Panc1 (cell line): ENCODE measurements at regions of chr10 and their contacts with region 1.

Region 1: GRCh38 chr10:109517748-109518147 is 405.6 kb downstream of the XPNPEP1 start:
- DNase-seq: no peak
- ATAC-seq: no peak
- H3K4me3 ChIP-seq: no peak overlapping the region
- H3K27ac ChIP-seq: no peak overlapping the region
- H3K4me1 ChIP-seq: no peaks in the 10 kb centered on the region
- H3K27me3 ChIP-seq: no peaks in the 10 kb centered on the region
- CTCF ChIP-seq: no peak

Region 2: GRCh38 chr10:107966673-107967225 is 1551.0 kb before region 1 on chr10:
- CTCF ChIA-PET with region 1: no interaction called
- POLR2A ChIA-PET with region 1: interaction called, 14 read pairs
- in situ Hi-C with region 1: no loop called
- intact Hi-C with region 1: no loop called
- DNase-seq: no peak
- ATAC-seq: no peak
- H3K4me3 ChIP-seq: no peak overlapping the region
- H3K27ac ChIP-seq: no peak overlapping the region
- H3K4me1 ChIP-seq: no peaks in the 10 kb centered on the region
- H3K27me3 ChIP-seq: no peaks in the 10 kb centered on the region
- CTCF ChIP-seq: no peak

Region 3: DNA sequence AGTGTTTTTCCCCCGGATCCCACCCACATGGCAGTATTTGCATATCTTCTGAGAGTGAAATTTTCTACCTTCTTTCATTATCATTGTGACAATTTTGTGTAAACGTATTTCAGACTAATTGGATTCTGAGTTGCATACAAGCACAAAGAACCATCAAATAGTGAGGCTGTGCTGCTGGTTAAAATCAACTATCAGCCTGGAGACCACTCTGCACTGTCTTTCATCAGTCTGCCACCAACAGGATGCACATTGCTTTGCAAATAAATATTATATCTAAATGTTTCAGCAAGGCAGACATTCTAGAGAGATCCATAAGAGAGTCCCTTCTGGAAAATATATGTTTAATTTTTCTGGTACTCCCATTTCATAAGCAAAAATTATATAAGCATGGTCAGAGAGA is 446.2 kb before region 1 on chr10:
- CTCF ChIA-PET with region 1: no interaction called
- POLR2A ChIA-PET with region 1: no interaction called
- in situ Hi-C with region 1: no loop called
- intact Hi-C with region 1: no loop called
- DNase-seq: no peak
- ATAC-seq: no peak
- H3K4me3 ChIP-seq: no peak overlapping the region
- H3K27ac ChIP-seq: no peak overlapping the region
- H3K4me1 ChIP-seq: no peaks in the 10 kb centered on the region
- H3K27me3 ChIP-seq: no peaks in the 10 kb centered on the region
- CTCF ChIP-seq: no peak